Psoas muscle (tissue), 8 donors: ENCODE measurements at regions of chr13 and their contacts with region 1.

Region 1: GRCh38 chr13:21006141-21007005 is 55.0 kb downstream of the LATS2 start:
- DNase-seq: no peak
- ATAC-seq: peak; percentile 48 to 71 (median 62)
- H3K4me3 ChIP-seq: no peak overlapping the region
- H3K27ac ChIP-seq: peak overlapping the region; percentile 53
- H3K4me1 ChIP-seq: peaks cover 60% of the 10 kb centered on the region
- H3K27me3 ChIP-seq: no peaks in the 10 kb centered on the region
- CTCF ChIP-seq: no peak

Region 2: GRCh38 chr13:20969182-20969581 is 37.2 kb before region 1 on chr13:
- intact Hi-C with region 1: loop called in 1 of 2 experiments (anchors 5 kb)
- DNase-seq: no peak
- ATAC-seq: no peak
- H3K4me3 ChIP-seq: no peak overlapping the region
- H3K27ac ChIP-seq: no peak overlapping the region
- H3K4me1 ChIP-seq: no peaks in the 10 kb centered on the region
- H3K27me3 ChIP-seq: no peaks in the 10 kb centered on the region
- CTCF ChIP-seq: no peak